ENCODE measurements at regions of chr2 and their contacts with region 1.

Region 1: GRCh38 chr2:174341286-174341994 is 6.7 kb downstream of the SP9 start:
- DNase-seq: peak; percentile 94
- H3K4me3 Mint-ChIP-seq: peak overlapping the region; percentile 66
- H3K27ac Mint-ChIP-seq: peak overlapping the region; percentile 60
- H3K4me1 Mint-ChIP-seq: peaks cover 39% of the 10 kb centered on the region
- H3K27me3 Mint-ChIP-seq: peaks cover 57% of the 10 kb centered on the region

Region 2: GRCh38 chr2:173027181-173028128 is 1314.0 kb before region 1 on chr2:
- CTCF ChIA-PET with region 1: interaction called, 15 read pairs
- POLR2A ChIA-PET with region 1: no interaction called
- intact Hi-C with region 1: loop called (anchors 5 kb)
- DNase-seq: peak; percentile 78
- H3K4me3 Mint-ChIP-seq: no peak overlapping the region
- H3K27ac Mint-ChIP-seq: no peak overlapping the region
- H3K4me1 Mint-ChIP-seq: no peaks in the 10 kb centered on the region
- H3K27me3 Mint-ChIP-seq: peaks cover 19% of the 10 kb centered on the region

Region 3: DNA sequence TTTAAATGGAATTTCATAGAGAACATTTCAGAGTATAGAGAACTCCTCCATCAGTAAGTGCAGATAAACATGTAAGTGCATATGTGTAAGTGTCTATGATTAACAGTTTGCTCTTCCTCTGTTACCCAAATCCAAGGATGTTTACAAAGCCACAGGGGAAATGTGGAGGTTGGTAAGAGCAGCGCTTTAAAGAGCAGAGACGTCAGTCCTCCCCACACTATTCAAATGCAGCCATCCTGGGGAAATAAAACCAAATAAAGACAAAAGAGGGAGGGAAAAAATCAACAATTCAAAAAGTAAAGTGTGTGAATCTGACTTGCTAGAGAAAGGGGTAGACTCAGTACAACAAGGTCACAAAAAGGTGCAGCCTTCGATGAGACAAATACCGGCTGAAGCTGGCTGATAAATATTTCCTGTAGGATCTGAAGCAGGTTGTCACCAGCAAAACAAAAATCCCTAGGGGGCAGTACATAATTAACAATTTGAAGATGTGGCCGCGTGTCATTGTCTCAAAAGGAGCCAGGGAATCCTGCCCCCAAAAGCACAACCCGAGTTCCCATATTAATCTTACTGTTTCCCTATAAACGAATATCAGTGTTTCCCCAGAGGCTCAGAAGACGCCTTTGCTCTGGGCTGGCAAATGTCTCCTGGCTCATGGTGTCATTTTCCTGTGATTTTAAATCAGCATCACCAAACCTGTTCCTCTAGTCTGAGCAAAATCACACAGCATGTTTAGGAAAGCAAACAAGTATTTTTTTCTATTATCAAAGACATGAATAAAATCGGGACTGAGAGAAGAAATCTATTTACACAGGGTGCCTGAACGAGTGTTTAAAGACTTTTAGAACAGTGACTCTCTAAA is 770.2 kb before region 1 on chr2:
- CTCF ChIA-PET with region 1: no interaction called
- POLR2A ChIA-PET with region 1: no interaction called
- intact Hi-C with region 1: loop called (anchors 5 kb)
- DNase-seq: no peak
- H3K4me3 Mint-ChIP-seq: no peak overlapping the region
- H3K27ac Mint-ChIP-seq: no peak overlapping the region
- H3K4me1 Mint-ChIP-seq: peaks cover 3% of the 10 kb centered on the region
- H3K27me3 Mint-ChIP-seq: peaks cover 7% of the 10 kb centered on the region

Region 4: GRCh38 chr2:173884025-173884802 is 457.2 kb before region 1 on chr2:
- CTCF ChIA-PET with region 1: interaction called, 12 read pairs
- POLR2A ChIA-PET with region 1: no interaction called
- intact Hi-C with region 1: no loop called
- DNase-seq: peak; percentile 41
- H3K4me3 Mint-ChIP-seq: no peak overlapping the region
- H3K27ac Mint-ChIP-seq: no peak overlapping the region
- H3K4me1 Mint-ChIP-seq: peaks cover 3% of the 10 kb centered on the region
- H3K27me3 Mint-ChIP-seq: peaks cover 8% of the 10 kb centered on the region

Region 5: GRCh38 chr2:174039551-174040416 is 301.7 kb before region 1 on chr2:
- CTCF ChIA-PET with region 1: no interaction called
- POLR2A ChIA-PET with region 1: no interaction called
- intact Hi-C with region 1: loop called (anchors 5 kb)
- DNase-seq: peak; percentile 90
- H3K4me3 Mint-ChIP-seq: peak overlapping the region; percentile 43
- H3K27ac Mint-ChIP-seq: peak overlapping the region; percentile 86
- H3K4me1 Mint-ChIP-seq: peaks cover 17% of the 10 kb centered on the region
- H3K27me3 Mint-ChIP-seq: peaks cover 7% of the 10 kb centered on the region

Region 6: DNA sequence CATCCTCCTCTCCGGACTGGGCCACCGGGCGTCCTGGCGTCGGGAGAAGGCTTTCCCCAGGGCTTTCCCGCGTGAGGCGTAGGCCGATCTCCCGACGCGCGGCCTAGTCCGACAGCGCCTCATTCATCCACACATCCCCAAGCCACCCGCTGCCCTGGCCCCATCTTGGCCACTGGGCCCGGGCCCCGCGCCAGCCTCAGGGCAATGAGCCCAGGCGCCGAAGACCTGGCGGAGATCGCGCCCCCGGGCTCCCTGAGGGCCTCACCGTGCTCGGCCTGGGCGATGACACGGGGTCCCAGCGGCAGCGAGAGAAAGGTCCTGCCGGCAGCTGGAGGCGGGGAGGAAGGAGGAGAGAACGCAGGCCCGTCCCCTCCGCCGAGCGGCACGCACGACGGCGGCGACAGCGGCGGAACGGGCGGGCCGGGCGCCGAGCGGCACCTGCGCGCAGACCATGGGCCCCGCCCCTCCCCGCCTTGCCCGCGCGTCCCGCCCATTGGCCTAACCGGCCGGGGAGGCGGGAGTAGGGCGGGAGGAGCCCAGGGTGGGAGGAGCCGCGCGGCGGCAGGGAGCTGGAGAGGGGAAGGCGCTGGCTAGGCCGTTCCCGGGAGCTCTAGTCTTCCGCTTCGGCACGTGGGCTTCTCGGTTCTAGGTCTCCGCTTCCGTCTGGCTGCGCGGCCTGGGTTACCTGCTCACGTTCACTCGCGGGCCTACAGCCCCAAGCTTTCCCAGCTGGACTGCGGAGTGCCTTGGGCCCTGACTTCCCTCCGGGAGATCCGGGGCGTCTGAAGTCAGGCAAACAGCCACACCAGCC is 93.0 kb before region 1 on chr2 and contains the start of gene OLA1:
- CTCF ChIA-PET with region 1: interaction called, 3 read pairs
- POLR2A ChIA-PET with region 1: no interaction called
- intact Hi-C with region 1: loop called (anchors 5 kb)
- DNase-seq: peak; percentile 97
- H3K4me3 Mint-ChIP-seq: peak within 1 kb of the TSS; percentile 86
- H3K27ac Mint-ChIP-seq: peak within 1 kb of the TSS; percentile 77
- H3K4me1 Mint-ChIP-seq: peaks cover 24% of the 10 kb centered on the region
- H3K27me3 Mint-ChIP-seq: no peaks in the 10 kb centered on the region
- total RNA-seq, gene OLA1: 111 to 117 TPM

Region 7: DNA sequence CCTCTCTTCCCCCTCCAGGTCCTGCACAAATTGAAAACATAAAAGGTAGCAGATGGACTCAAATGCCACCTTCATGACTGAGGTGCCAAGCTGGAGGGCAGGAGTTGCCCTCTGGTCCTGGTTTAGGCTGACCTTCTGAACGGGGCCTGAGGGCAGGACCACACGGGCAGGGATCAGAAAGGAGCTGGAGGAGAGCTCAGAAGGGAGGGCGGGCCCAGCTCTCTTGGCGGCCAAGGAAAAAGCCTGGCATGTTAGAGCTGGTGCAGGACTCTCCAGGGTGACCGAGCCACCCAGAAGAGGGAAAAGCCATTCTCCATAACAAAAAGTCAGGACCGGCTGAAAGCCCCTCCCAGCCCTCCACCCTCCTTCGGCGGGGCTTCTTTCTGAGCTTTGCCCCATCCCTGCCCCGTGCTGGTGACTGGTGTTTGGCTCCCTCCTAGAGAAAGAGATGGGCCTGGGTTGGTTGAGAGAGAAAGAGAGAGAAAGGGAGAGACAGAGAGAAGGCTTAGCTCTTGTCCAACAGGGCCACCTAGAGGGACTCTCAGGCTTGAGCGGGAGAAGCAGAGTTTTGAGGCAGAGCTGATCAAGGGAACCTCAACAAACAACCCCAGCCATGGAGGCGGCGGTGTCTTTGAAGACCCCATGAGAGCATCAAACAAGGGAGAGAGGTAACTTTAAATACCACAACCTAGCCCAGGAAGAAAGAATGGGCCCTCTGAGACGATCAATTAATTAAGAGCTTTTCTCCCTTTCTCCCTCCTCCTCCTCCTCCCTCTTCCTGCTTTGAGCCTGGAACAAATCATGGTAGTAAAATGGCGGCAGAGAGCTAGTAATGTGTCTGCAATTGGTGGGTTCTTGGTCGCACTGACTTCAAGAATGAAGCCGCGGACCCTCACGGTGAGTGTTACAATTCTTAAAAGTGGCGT is 205.4 kb after region 1 on chr2:
- CTCF ChIA-PET with region 1: no interaction called
- POLR2A ChIA-PET with region 1: no interaction called
- intact Hi-C with region 1: loop called (anchors 5 kb)
- DNase-seq: peak; percentile 66
- H3K4me3 Mint-ChIP-seq: no peak overlapping the region
- H3K27ac Mint-ChIP-seq: peak overlapping the region; percentile 65
- H3K4me1 Mint-ChIP-seq: peaks cover 22% of the 10 kb centered on the region
- H3K27me3 Mint-ChIP-seq: no peaks in the 10 kb centered on the region

Measured in activated CD4-positive, alpha-beta memory T cell treated with anti-CD3 and anti-CD28 coated beads for 36 hours (primary cell).